ENCODE measurements at regions of chr19 and their contacts with region 1.

Region 1: DNA sequence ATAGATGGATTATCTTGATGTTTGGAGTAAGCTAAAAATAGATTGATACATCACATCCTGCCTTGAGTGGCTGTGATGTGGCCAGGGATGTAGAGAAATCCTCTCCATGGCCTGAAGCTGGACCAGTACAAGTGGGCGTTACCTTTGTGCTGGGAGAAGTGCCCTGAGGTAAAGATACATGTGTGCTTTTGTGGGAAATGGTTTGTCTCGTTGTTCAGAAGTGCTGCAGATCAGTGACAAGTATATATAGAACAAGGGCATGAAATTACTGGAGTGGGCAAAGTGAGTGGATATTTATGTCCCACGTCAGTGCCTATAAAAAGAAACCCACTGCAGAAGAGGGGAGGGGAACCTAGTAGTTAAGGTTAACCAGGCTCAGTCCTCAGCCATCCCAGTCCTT is 12.2 kb upstream of the ZNF304 start:
- DNase-seq: no peak
- H3K4me3 ChIP-seq: no peak overlapping the region
- H3K27ac ChIP-seq: peak overlapping the region in 2 of 4 donors; percentile 9 to 39
- H3K4me1 ChIP-seq: no peaks in the 10 kb centered on the region
- H3K27me3 ChIP-seq: no peaks in the 10 kb centered on the region
- CTCF ChIP-seq: no peak
- EP300 ChIP-seq: no peak
- POLR2A ChIP-seq: no peak

Region 2: GRCh38 chr19:57212109-57212508 is 126.8 kb before region 1 on chr19:
- in situ Hi-C with region 1: no loop called
- intact Hi-C with region 1: no loop called
- DNase-seq: no peak
- H3K4me3 ChIP-seq: no peak overlapping the region
- H3K27ac ChIP-seq: no peak overlapping the region
- H3K4me1 ChIP-seq: no peaks in the 10 kb centered on the region
- H3K27me3 ChIP-seq: no peaks in the 10 kb centered on the region
- CTCF ChIP-seq: no peak
- EP300 ChIP-seq: no peak
- POLR2A ChIP-seq: no peak

Region 3: DNA sequence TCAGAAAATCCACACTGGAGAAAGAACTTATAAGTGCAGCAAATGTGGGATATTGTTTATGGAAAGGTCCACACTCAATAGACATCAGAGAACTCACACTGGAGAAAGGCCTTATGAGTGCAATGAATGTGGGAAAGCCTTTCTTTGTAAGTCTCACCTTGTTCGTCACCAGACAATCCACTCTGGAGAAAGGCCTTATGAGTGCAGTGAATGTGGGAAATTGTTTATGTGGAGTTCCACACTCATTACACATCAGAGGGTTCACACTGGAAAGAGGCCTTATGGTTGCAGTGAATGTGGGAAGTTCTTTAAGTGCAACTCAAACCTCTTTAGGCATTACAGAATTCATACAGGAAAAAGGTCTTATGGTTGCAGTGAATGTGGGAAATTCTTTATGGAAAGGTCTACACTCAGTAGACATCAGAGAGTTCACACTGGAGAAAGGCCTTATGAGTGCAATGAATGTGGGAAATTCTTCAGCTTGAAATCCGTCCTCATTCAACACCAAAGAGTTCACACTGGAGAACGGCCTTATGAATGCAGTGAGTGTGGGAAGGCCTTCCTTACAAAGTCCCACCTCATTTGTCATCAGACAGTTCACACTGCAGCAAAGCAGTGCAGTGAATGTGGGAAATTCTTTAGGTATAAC is 38.7 kb after region 1 on chr19:
- in situ Hi-C with region 1: no loop called
- intact Hi-C with region 1: loop called (anchors 1 kb)
- DNase-seq: no peak
- H3K4me3 ChIP-seq: no peak overlapping the region
- H3K27ac ChIP-seq: no peak overlapping the region
- H3K4me1 ChIP-seq: no peaks in the 10 kb centered on the region
- H3K27me3 ChIP-seq: no peaks in the 10 kb centered on the region
- CTCF ChIP-seq: no peak
- EP300 ChIP-seq: no peak
- POLR2A ChIP-seq: no peak

Measured in transverse colon (tissue), 4 donors.